Activated CD4-positive, alpha-beta T cell treated with anti-CD3 and anti-CD28 coated beads, Interleukin-2, amount 10 ng/mL, durations not matched to agents 24 days and 14 days (primary cell): ENCODE measurements at regions of chr6 and their contacts with region 1.

Region 1: GRCh38 chr6:111483736-111484632 is 966 bp upstream of the REV3L start:
- DNase-seq: peak; percentile 96
- H3K4me3 Mint-ChIP-seq: peak overlapping the region; percentile 90
- H3K27ac Mint-ChIP-seq: peak overlapping the region; percentile 98
- H3K4me1 Mint-ChIP-seq: peaks cover 47% of the 10 kb centered on the region
- H3K27me3 Mint-ChIP-seq: no peaks in the 10 kb centered on the region

Region 2: DNA sequence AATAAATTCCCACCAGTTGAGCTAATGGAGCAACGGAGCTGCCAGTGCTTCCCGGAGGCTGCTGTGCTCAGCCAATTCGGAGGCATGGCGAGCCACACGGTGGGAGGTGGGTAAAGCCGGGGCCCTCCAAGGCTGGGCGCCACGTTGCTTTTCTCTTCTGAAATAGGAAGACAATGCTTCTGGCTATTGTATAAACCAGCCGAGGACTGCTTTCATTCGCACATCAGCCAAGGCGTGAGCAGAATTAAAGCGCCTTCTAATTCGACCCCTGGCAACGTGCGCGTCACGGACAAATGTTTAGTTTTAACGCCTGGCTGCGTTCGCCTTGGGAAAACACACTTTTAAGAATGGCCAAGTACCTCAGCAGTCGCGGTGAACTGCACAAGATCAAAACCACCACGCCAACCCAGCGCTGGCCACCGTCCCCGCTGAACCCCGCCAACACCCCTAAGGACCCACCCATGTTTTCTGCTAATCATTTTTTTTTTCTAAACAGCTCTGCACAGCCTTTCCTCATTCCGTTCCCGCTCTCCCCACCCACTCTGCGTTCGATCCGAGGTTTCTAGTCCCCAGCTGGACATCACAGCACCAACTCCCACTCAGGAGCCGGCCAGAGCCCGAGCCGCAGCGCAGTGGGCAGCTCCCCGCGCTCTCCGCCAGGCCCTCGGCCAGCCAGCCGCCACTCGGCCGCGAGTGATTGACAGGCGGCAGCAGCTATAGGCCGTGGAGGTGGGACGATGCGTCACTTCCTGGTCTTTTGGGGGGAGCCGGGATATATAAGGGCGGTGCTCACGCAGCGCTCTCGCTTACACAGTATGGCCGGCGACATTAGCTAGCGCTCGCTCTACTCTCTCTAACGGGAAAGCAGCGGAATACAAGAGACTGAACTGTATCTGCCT is 609.8 kb before region 1 on chr6 and contains the start of gene AMD1:
- intact Hi-C with region 1: loop called (anchors 5 kb)
- DNase-seq: peak; percentile 98
- H3K4me3 Mint-ChIP-seq: peak within 1 kb of the TSS; percentile 98
- H3K27ac Mint-ChIP-seq: peak within 1 kb of the TSS; percentile 99
- H3K4me1 Mint-ChIP-seq: peaks cover 27% of the 10 kb centered on the region
- H3K27me3 Mint-ChIP-seq: no peaks in the 10 kb centered on the region
- total RNA-seq, gene AMD1: 108 and 113 TPM in 2 replicates

Region 3: GRCh38 chr6:111301946-111302345 is 182.0 kb before region 1 on chr6:
- intact Hi-C with region 1: no loop called
- DNase-seq: no peak
- H3K4me3 Mint-ChIP-seq: no peak overlapping the region
- H3K27ac Mint-ChIP-seq: no peak overlapping the region
- H3K4me1 Mint-ChIP-seq: peaks cover 7% of the 10 kb centered on the region
- H3K27me3 Mint-ChIP-seq: no peaks in the 10 kb centered on the region

Region 4: DNA sequence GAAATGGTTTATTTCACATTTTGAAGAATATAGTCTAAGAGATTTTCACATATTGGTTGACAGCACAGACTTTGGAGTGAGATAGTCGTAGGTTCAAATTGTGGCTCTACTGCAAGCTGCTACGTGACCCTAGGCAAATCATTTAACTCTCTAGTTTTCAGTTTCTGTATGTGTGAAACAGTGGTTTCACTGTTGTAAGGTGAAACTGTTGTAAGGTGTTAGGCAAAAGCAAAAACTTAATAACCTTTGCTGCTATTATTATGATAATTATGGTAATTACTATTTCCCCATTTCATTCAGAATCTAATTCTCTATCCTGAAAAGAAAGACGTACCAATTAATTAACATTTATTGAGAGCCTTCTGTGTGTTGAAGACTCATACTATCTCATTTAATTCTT is 145.1 kb before region 1 on chr6:
- intact Hi-C with region 1: loop called (anchors 2 kb)
- DNase-seq: no peak
- H3K4me3 Mint-ChIP-seq: no peak overlapping the region
- H3K27ac Mint-ChIP-seq: no peak overlapping the region
- H3K4me1 Mint-ChIP-seq: peaks cover 15% of the 10 kb centered on the region
- H3K27me3 Mint-ChIP-seq: no peaks in the 10 kb centered on the region

Region 5: DNA sequence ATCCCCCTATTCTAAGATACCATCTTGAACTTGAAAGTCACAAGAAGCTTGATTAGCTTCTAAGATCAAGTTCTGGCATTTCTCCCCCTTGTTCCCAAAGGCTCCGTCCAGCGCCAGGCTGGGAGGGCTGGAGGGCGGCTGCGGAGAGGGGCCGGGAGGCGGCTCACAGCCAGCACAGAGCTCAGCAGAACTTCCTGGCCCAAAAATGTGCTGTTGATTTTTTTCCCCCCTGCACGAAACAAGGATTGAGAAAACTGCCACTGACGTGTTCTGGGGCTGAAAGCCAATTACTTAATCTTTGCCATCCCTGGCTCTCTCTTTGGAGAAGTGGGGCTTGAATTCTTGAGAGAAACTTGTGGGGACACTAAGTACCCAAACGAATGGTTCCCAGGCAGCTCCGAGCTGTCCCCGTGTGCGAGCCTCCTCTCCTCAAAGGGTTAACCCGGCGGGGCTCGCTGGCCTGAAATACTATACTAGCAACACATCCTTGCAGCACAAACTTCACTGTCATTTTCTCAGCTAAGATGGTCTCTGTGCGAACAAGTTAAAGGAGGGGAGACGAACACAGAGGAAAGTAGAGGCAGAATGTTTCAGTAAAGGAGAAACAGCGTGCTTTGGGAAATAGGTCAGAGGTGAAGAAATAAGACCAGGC is 121.2 kb after region 1 on chr6:
- intact Hi-C with region 1: loop called (anchors 1 kb)
- DNase-seq: peak; percentile 78
- H3K4me3 Mint-ChIP-seq: peak overlapping the region; percentile 90
- H3K27ac Mint-ChIP-seq: peak overlapping the region; percentile 99
- H3K4me1 Mint-ChIP-seq: peaks cover 30% of the 10 kb centered on the region
- H3K27me3 Mint-ChIP-seq: no peaks in the 10 kb centered on the region

Region 6: GRCh38 chr6:111804627-111805235 is 320.7 kb after region 1 on chr6:
- intact Hi-C with region 1: loop called (anchors 10 kb)
- DNase-seq: peak; percentile 90
- H3K4me3 Mint-ChIP-seq: peak overlapping the region; percentile 82
- H3K27ac Mint-ChIP-seq: peak overlapping the region; percentile 99
- H3K4me1 Mint-ChIP-seq: peaks cover 82% of the 10 kb centered on the region
- H3K27me3 Mint-ChIP-seq: no peaks in the 10 kb centered on the region

Region 7: DNA sequence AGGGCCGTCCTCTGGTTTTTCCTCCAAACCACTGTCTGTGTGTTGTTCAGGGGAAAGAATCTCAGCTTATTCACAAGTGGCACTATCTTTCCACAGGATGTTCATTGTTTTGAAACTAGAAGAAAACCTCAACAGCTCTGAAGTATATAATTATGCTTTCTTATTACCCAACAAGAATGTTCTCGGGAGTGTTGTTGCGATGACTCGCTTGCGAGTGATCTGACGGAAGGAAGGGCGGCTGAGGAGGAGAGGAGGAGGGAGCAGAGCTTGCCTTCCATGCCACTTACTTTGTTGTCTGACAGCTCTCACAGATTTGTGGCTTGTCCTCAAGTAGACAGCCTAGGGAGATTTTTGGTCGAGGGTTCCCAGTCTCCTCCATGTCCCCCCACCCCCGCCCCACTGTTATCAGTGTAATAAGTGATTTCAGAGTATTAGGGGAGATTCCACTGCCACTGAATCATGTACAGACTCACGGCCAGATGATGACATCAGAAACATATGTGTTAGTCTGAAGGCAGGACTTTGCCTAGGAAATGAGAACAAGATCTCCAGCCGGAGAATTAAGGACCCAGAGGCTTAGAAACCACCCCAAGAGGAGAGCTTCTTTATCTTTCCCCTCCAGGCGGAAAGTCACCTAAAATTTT is 489.3 kb after region 1 on chr6:
- intact Hi-C with region 1: loop called (anchors 5 kb)
- DNase-seq: peak; percentile 86
- H3K4me3 Mint-ChIP-seq: peak overlapping the region; percentile 73
- H3K27ac Mint-ChIP-seq: peak overlapping the region; percentile 86
- H3K4me1 Mint-ChIP-seq: peaks cover 51% of the 10 kb centered on the region
- H3K27me3 Mint-ChIP-seq: peaks cover 7% of the 10 kb centered on the region